ENCODE measurements at regions of chr10 and their contacts with region 1.

Region 1: DNA sequence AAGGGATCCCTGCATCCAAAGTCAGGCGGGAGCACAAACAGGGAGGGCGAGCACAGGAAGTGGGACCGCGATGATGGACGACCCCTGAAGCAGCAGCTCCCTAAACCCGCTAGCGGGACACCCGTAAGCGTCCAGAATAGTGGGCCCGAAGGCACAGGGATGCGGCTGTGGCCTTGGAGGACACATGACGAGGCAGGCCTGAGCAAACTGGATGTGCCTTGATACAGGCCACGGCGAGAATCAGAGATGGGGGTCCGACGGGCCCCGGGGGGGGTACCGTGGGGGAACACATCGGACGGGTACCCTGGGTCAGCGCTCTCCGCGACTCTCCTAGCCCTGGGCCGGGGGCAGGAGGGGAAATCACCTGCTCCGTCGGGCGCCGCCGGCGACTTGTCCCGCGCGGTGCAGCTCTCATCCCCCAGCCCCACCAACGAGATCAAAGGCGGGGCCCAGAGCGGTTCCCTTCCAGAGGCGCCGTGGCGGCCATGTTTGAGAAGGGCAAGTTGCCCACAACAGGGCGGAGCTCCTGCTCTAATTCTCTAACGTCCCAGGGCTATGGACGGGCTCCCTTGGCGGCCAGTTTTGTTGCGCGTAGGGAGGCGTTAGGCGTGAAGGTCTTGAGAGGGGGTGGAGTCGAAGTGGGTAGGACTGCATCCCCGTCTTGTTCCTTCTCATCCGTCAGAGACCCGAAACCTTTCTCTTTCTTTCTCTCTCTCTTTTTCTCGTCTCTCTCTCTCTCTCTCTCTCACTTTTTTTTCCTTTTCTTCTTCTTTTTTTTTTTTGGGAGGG is at the start of gene CUEDC2:
- DNase-seq: peak; percentile 96
- ATAC-seq: peak; percentile 98
- H3K4me3 ChIP-seq: peak within 1 kb of the TSS; percentile 54 to 93 (median 90)
- H3K4me3 Mint-ChIP-seq: peak within 1 kb of the TSS; percentile 96
- H3K27ac ChIP-seq: peak within 1 kb of the TSS; percentile 28 to 75
- H3K27ac Mint-ChIP-seq: peak within 1 kb of the TSS; percentile 91
- H3K4me1 ChIP-seq: peaks cover 26 to 42% of the 10 kb centered on the region in 2 donors
- H3K4me1 Mint-ChIP-seq: peaks cover 37% of the 10 kb centered on the region
- H3K27me3 ChIP-seq: no peaks in the 10 kb centered on the region
- H3K27me3 Mint-ChIP-seq: no peaks in the 10 kb centered on the region
- CTCF ChIP-seq: no peak
- total RNA-seq, gene CUEDC2: 35.6 and 37.0 TPM in 2 replicates

Region 2: DNA sequence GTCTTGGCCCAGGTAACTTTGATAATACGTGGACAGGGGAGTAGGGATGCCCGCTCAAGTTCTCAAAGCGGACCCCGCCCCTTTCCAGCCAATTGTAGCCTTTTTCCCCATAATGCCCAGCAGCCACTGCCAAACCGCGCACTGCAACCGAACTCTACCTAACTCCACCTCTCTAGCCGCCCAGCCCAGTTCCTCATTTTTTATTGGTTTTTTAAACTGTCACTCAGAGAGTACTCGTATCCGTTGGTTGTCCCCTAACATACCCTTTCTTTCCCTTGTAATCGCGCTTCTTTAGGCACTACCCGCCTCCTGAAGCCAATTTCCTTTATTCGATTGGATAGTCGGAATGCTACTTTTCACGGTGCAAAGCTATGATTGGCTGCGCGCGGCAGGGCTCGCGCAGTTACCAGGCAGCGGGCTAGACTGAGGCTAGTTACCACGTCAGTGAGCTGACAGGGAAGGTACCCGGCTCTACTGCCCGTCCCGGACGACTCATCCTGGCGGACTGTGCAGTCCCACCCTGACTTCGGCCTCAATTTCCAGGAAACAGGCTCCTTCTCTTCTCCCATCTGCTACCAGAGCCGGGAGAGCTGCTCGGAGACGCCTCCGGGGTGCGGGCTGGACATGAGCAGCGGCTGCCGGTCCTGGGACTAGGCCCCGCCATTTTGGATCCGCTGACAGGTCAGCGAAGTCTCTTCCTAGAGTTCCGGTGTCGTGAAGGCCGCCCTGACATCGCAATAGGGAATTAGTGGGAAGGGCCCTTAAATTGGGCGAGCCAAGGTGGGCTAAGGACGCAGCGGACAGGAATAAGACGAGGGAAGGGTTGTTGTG is 187.0 kb before region 1 on chr10 and contains the start of gene GBF1:
- CTCF ChIA-PET with region 1: no interaction called
- POLR2A ChIA-PET with region 1: interaction called, 12 read pairs
- intact Hi-C with region 1: loop called (anchors 1 kb)
- DNase-seq: peak; percentile 98
- ATAC-seq: peak; percentile 86
- H3K4me3 ChIP-seq: peak within 1 kb of the TSS; percentile 80 to 99 (median 98)
- H3K4me3 Mint-ChIP-seq: peak within 1 kb of the TSS; percentile 94
- H3K27ac ChIP-seq: peak within 1 kb of the TSS; percentile 86 to 90
- H3K27ac Mint-ChIP-seq: peak within 1 kb of the TSS; percentile 38
- H3K4me1 ChIP-seq: peaks cover 50 to 51% of the 10 kb centered on the region in 2 donors
- H3K4me1 Mint-ChIP-seq: peaks cover 56% of the 10 kb centered on the region
- H3K27me3 ChIP-seq: peaks cover 0 to 31% (median 27%) of the 10 kb centered on the region in 4 experiments
- H3K27me3 Mint-ChIP-seq: peaks cover 23% of the 10 kb centered on the region
- CTCF ChIP-seq: no peak
- total RNA-seq, gene GBF1: 39.3 and 41.2 TPM in 2 replicates

Region 3: GRCh38 chr10:102399217-102400089 is 32.9 kb before region 1 on chr10:
- CTCF ChIA-PET with region 1: interaction called, 12 read pairs
- POLR2A ChIA-PET with region 1: interaction called, 6 read pairs
- intact Hi-C with region 1: no loop called
- DNase-seq: peak; percentile 94
- ATAC-seq: peak; percentile 39
- H3K4me3 ChIP-seq: peak overlapping the region in 4 of 5 experiments; percentile 29 to 53 (median 49)
- H3K4me3 Mint-ChIP-seq: peak overlapping the region; percentile 95
- H3K27ac ChIP-seq: peak overlapping the region; percentile 74 to 80
- H3K27ac Mint-ChIP-seq: peak overlapping the region; percentile 92
- H3K4me1 ChIP-seq: peaks cover 36 to 46% of the 10 kb centered on the region in 2 donors
- H3K4me1 Mint-ChIP-seq: peaks cover 46% of the 10 kb centered on the region
- H3K27me3 ChIP-seq: no peaks in the 10 kb centered on the region
- H3K27me3 Mint-ChIP-seq: no peaks in the 10 kb centered on the region
- CTCF ChIP-seq: peak; percentile 94

Region 4: GRCh38 chr10:102450194-102450938 is 18.0 kb after region 1 on chr10:
- CTCF ChIA-PET with region 1: interaction called, 14 read pairs
- POLR2A ChIA-PET with region 1: interaction called, 28 read pairs
- intact Hi-C with region 1: loop called (anchors 1 kb)
- DNase-seq: peak; percentile 96
- ATAC-seq: peak; percentile 79
- H3K4me3 ChIP-seq: peak overlapping the region; percentile 75 to 97 (median 87)
- H3K4me3 Mint-ChIP-seq: peak overlapping the region; percentile 97
- H3K27ac ChIP-seq: peak overlapping the region; percentile 81 to 86
- H3K27ac Mint-ChIP-seq: peak overlapping the region; percentile 97
- H3K4me1 ChIP-seq: peaks cover 12 to 15% of the 10 kb centered on the region in 2 donors
- H3K4me1 Mint-ChIP-seq: peaks cover 19% of the 10 kb centered on the region
- H3K27me3 ChIP-seq: no peaks in the 10 kb centered on the region
- H3K27me3 Mint-ChIP-seq: no peaks in the 10 kb centered on the region
- CTCF ChIP-seq: no peak

Region 5: DNA sequence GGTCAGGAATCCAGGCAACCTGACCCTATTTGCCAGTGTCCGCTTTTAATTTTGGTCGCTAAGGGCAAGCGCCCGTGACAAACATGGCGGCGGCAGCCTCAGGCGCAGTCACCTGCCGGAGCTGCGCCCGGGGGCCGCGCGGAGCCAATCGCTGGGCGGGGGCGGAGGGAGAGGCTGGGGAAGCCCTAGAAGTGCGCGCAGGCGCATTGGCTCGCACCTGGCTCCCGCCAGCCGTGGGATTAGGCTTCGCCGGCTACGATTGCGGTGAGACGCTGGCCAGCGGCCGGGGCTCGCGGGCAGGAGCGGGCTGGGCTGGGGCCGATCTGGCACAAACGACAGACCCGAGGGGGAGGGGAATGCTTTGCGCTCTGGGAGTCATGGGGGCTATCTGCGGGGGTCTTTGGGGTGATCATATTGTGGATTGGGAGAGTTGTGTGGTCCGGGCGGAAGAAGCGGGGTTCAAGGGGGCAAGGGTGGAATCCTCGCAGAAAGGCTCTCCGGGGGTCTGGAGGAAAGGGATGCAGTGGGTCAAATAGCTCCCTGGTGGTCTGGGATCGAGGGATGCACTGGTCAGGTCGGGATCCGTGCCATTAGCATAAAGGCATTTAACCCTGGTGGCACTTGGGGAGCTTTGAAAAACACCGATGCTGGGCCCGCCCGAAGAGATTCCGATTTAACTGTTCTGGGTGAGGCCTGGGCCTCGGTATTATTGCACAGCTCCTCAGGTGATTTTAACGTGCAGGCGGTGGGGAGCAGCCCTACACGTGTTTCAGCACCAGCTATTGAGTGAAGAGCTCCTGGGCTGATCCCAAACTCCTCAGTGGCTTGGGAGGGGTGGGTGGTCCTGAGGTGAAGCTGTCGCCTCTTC is 29.1 kb after region 1 on chr10:
- CTCF ChIA-PET with region 1: no interaction called
- POLR2A ChIA-PET with region 1: interaction called, 16 read pairs
- intact Hi-C with region 1: loop called (anchors 1 kb)
- DNase-seq: peak; percentile 95
- ATAC-seq: peak; percentile 99
- H3K4me3 ChIP-seq: peak overlapping the region; percentile 34 to 76 (median 68)
- H3K4me3 Mint-ChIP-seq: peak overlapping the region; percentile 85
- H3K27ac ChIP-seq: peak overlapping the region; percentile 17 to 71
- H3K27ac Mint-ChIP-seq: peak overlapping the region; percentile 76
- H3K4me1 ChIP-seq: peaks cover 17 to 23% of the 10 kb centered on the region in 2 donors
- H3K4me1 Mint-ChIP-seq: peaks cover 29% of the 10 kb centered on the region
- H3K27me3 ChIP-seq: peaks cover 0 to 4% (median 0%) of the 10 kb centered on the region in 4 experiments
- H3K27me3 Mint-ChIP-seq: no peaks in the 10 kb centered on the region
- CTCF ChIP-seq: no peak

Region 6: GRCh38 chr10:102484021-102484420 is 51.7 kb after region 1 on chr10:
- CTCF ChIA-PET with region 1: interaction called, 12 read pairs
- POLR2A ChIA-PET with region 1: no interaction called
- intact Hi-C with region 1: no loop called
- DNase-seq: no peak
- ATAC-seq: no peak
- H3K4me3 ChIP-seq: no peak overlapping the region
- H3K4me3 Mint-ChIP-seq: no peak overlapping the region
- H3K27ac ChIP-seq: no peak overlapping the region
- H3K27ac Mint-ChIP-seq: no peak overlapping the region
- H3K4me1 ChIP-seq: peaks cover 0 to 3% of the 10 kb centered on the region in 2 donors
- H3K4me1 Mint-ChIP-seq: peaks cover 3% of the 10 kb centered on the region
- H3K27me3 ChIP-seq: no peaks in the 10 kb centered on the region
- H3K27me3 Mint-ChIP-seq: no peaks in the 10 kb centered on the region
- CTCF ChIP-seq: no peak

Region 7: GRCh38 chr10:102523250-102524029 is 91.1 kb after region 1 on chr10:
- CTCF ChIA-PET with region 1: no interaction called
- POLR2A ChIA-PET with region 1: no interaction called
- intact Hi-C with region 1: no loop called
- DNase-seq: no peak
- ATAC-seq: no peak
- H3K4me3 ChIP-seq: no peak overlapping the region
- H3K4me3 Mint-ChIP-seq: no peak overlapping the region
- H3K27ac ChIP-seq: no peak overlapping the region
- H3K27ac Mint-ChIP-seq: no peak overlapping the region
- H3K4me1 ChIP-seq: no peaks in the 10 kb centered on the region
- H3K4me1 Mint-ChIP-seq: no peaks in the 10 kb centered on the region
- H3K27me3 ChIP-seq: no peaks in the 10 kb centered on the region
- H3K27me3 Mint-ChIP-seq: no peaks in the 10 kb centered on the region
- CTCF ChIP-seq: no peak

Measured in B cell (primary cell).